ENCODE measurements at regions of chr1 and their contacts with region 1.

Region 1: DNA sequence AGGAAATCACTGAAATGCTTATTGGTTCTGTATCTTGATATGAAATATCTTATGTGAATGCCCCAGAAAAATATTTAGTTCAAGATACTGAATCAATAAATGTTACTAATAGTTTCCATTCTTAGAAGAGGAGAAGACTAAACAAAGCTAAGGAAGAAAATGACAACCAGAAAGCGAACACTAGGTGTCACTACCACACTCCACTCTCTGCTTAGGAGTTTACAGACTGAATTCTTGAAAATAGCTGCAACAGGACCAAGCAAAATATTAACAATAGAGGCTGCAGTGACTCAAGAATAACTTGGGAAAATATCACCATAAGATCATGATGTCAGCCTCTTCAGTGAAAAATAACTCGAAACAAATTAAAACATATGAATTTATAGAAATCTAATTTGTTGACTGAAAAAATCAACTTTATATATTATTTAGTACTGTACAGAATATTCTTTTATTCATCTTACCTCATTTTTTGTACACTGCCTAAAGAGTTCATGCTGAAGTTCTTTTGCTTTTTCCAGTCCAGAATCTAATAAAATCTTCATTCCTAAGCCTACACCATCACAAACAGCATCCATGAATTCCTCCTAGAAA is 61.6 kb downstream of the KIF14 start:
- DNase-seq: no peak
- ATAC-seq: no peak
- H3K4me3 Mint-ChIP-seq: no peak overlapping the region
- H3K27ac Mint-ChIP-seq: no peak overlapping the region
- H3K4me1 Mint-ChIP-seq: peaks cover 4% of the 10 kb centered on the region
- H3K27me3 Mint-ChIP-seq: no peaks in the 10 kb centered on the region
- CTCF ChIP-seq: peak; percentile 57

Region 2: DNA sequence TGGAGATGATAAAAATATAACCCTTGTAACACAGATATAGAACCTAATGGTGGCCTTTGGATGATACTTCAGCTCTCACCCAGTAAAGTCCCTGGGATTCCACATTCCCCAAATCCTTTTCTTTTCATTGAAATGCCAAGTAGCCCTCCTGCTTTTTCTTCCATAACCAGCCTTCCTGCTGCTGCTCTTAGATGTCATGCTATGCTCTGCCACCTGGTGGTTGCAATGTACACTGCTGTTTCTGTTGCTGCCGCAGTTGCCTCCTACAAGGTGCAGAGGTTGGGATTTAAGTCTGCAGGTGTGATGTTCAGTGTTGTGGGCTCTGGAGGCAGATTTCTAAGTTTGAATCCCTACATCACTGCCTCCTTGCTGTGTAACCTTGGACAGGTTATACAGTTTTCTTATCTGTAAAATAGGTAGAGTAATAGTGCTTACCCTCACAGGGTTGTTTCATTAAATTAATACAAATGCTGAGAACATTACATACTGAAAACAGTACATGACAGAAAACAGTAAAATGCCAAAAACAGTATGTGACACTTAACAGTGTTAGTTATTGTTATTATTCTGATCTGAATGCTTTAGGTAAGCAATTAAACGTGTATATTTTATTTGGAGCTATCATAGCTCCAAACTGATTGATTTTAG is 244.0 kb after region 1 on chr1:
- CTCF ChIA-PET with region 1: interaction called, 37 read pairs
- POLR2A ChIA-PET with region 1: no interaction called
- intact Hi-C with region 1: loop called (anchors 1 kb)
- DNase-seq: peak; percentile 26
- ATAC-seq: peak; percentile 81
- H3K4me3 Mint-ChIP-seq: no peak overlapping the region
- H3K27ac Mint-ChIP-seq: no peak overlapping the region
- H3K4me1 Mint-ChIP-seq: no peaks in the 10 kb centered on the region
- H3K27me3 Mint-ChIP-seq: peaks cover 10% of the 10 kb centered on the region
- CTCF ChIP-seq: peak; percentile 61

Region 3: DNA sequence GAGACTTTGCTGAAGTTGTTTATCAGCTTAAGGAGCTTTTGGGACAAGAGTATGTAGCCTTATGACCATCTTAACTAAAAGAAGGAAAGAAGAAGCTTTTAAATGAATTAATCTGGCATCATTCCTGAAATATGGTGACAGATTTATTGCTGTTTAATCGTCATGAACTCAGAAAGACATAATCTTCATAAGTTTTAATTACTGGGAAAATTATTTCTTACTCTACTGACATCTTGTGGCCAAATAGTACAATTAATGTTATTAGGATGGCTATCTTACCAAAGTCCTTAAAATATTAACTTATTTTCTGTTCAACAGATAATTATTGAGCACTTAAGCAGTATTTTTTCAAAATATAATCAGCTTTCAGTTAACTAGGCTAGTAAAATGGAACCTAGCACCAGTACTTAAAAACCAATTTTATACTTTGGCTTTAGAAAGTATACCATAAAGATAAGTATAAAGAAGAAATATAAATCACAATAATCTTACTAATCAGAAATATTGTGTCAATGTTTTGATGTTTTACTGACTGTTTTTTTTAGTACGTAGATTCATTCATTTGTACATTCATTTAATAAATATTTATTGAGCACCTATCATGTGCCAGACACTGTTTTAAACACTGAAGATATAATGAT is 279.1 kb after region 1 on chr1:
- CTCF ChIA-PET with region 1: interaction called, 9 read pairs
- POLR2A ChIA-PET with region 1: no interaction called
- intact Hi-C with region 1: loop called (anchors 1 kb)
- DNase-seq: no peak
- ATAC-seq: no peak
- H3K4me3 Mint-ChIP-seq: no peak overlapping the region
- H3K27ac Mint-ChIP-seq: no peak overlapping the region
- H3K4me1 Mint-ChIP-seq: no peaks in the 10 kb centered on the region
- H3K27me3 Mint-ChIP-seq: no peaks in the 10 kb centered on the region
- CTCF ChIP-seq: no peak

Measured in activated B cell treated with CpG ODN at 0.5 μM for 24 hours (primary cell).